ENCODE measurements at regions of chr19 and their contacts with region 1.

Region 1: GRCh38 chr19:4217429-4218264 is 11.7 kb upstream of the EBI3 start:
- DNase-seq: no peak
- ATAC-seq: peak in 1 of 4 donors; percentile 16
- H3K4me3 ChIP-seq: no peak overlapping the region
- H3K27ac ChIP-seq: no peak overlapping the region
- H3K4me1 ChIP-seq: no peaks in the 10 kb centered on the region
- H3K27me3 ChIP-seq: no peaks in the 10 kb centered on the region
- CTCF ChIP-seq: no peak
- POLR2A ChIP-seq: no peak

Region 2: GRCh38 chr19:3783660-3784584 is 433.7 kb before region 1 on chr19:
- intact Hi-C with region 1: loop called in 1 of 2 experiments (anchors 10 kb)
- DNase-seq: no peak
- ATAC-seq: peak; percentile 39 to 75 (median 53)
- H3K4me3 ChIP-seq: no peak overlapping the region
- H3K27ac ChIP-seq: no peak overlapping the region
- H3K4me1 ChIP-seq: no peaks in the 10 kb centered on the region
- H3K27me3 ChIP-seq: no peaks in the 10 kb centered on the region
- CTCF ChIP-seq: peak; percentile 15 to 40 (median 34)
- POLR2A ChIP-seq: no peak

Region 3: GRCh38 chr19:3852614-3853254 is 364.9 kb before region 1 on chr19:
- intact Hi-C with region 1: loop called in 1 of 2 experiments (anchors 10 kb)
- DNase-seq: peak in 2 of 3 donors; percentile 55 to 62
- ATAC-seq: peak; percentile 62 to 88 (median 70)
- H3K4me3 ChIP-seq: no peak overlapping the region
- H3K27ac ChIP-seq: no peak overlapping the region
- H3K4me1 ChIP-seq: no peaks in the 10 kb centered on the region
- H3K27me3 ChIP-seq: no peaks in the 10 kb centered on the region
- CTCF ChIP-seq: peak; percentile 50 to 55 (median 53)
- POLR2A ChIP-seq: no peak

Measured in right lobe of liver (tissue), 6 donors.